ENCODE measurements at regions of chr5 and their contacts with region 1.

Region 1: GRCh38 chr5:94731471-94731870 is 113.0 kb downstream of the SLF1 start:
- DNase-seq: no peak
- ATAC-seq: no peak
- H3K4me3 ChIP-seq: no peak overlapping the region
- H3K4me3 Mint-ChIP-seq: no peak overlapping the region
- H3K27ac ChIP-seq: no peak overlapping the region
- H3K27ac Mint-ChIP-seq: no peak overlapping the region
- H3K4me1 ChIP-seq: no peaks in the 10 kb centered on the region
- H3K4me1 Mint-ChIP-seq: no peaks in the 10 kb centered on the region
- H3K27me3 ChIP-seq: no peaks in the 10 kb centered on the region
- H3K27me3 Mint-ChIP-seq: no peaks in the 10 kb centered on the region
- CTCF ChIP-seq: no peak

Region 2: DNA sequence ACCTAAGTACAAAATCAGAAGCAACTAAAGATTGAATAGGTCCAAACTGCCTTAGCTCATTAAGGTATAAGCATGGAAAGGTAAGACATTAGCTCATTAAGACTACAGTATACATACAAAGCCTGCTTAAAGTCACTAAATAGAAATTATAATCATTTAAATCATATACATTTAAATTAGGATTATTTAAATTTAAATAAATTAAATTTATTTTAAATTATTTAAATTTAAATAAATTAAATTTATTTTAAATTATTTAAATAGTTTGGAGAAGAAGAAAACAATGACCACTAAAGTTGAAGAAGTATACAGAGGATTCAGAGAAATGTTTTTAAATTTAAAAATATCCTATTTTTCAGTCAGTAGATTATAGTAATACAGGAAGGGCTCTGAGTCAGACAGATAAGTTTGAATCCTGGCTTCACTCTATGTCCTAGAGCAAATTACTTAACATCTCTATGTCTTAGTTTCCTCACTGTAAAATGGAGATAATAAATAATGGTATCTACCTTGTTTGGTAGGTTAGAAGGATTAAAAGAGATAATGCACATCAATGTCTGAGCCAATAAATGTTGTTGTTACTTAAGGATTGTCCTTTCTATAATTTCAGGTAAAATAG is 213.9 kb before region 1 on chr5:
- CTCF ChIA-PET with region 1: no interaction called
- POLR2A ChIA-PET with region 1: no interaction called
- intact Hi-C with region 1: loop called in 1 of 2 experiments (anchors 2 kb)
- DNase-seq: no peak
- ATAC-seq: no peak
- H3K4me3 ChIP-seq: no peak overlapping the region
- H3K4me3 Mint-ChIP-seq: no peak overlapping the region
- H3K27ac ChIP-seq: no peak overlapping the region
- H3K27ac Mint-ChIP-seq: no peak overlapping the region
- H3K4me1 ChIP-seq: no peaks in the 10 kb centered on the region
- H3K4me1 Mint-ChIP-seq: no peaks in the 10 kb centered on the region
- H3K27me3 ChIP-seq: no peaks in the 10 kb centered on the region
- H3K27me3 Mint-ChIP-seq: no peaks in the 10 kb centered on the region
- CTCF ChIP-seq: no peak